ENCODE measurements at regions of chr3 and their contacts with region 1.

Region 1: DNA sequence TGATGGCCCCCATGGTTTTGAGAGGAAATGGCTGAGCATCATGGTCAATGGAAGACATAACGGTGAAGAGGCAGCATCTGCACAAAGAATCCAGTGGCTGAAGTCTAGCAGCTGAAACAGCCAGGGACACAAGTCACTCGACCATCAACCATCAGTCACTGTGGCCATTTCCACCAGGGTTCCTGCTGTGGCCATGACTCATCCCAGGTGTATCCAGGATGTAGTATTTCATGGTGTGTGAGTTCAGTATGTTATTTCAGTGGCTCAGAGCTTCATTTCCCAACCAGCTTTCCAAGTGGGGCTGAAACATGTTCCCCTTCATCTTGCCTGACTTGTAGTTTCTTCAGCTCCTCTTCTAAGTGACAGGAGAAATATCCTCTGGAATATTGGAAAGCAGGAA is 47.8 kb upstream of the WNT5A start:
- H3K4me3 ChIP-seq: no peak overlapping the region
- H3K27ac ChIP-seq: no peak overlapping the region
- H3K4me1 ChIP-seq: no peaks in the 10 kb centered on the region
- CTCF ChIP-seq: no peak

Region 2: DNA sequence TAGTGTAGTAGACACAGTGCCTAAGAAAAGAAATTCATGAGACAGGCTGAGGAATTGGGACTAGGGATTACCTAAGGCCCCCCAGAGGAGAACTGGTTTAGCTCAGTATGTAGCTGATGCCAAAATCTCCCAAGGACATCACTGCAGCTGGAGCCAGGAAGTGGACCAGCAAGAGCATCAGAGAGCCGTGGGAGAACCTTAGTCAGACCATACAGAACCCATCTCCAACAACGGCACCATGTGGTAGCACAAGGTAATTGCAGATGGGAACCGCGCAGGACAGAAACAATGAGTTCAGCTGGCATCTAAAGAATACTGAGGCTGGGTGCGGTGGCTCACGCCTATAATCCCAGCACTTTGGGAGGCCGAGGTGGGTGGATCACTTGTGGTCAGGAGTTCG is 129.4 kb before region 1 on chr3:
- CTCF ChIA-PET with region 1: no interaction called
- POLR2A ChIA-PET with region 1: no interaction called
- H3K4me3 ChIP-seq: no peak overlapping the region
- H3K27ac ChIP-seq: no peak overlapping the region
- H3K4me1 ChIP-seq: no peaks in the 10 kb centered on the region
- CTCF ChIP-seq: no peak

Region 3: GRCh38 chr3:55524565-55525244 is 10.2 kb before region 1 on chr3:
- CTCF ChIA-PET with region 1: no interaction called
- POLR2A ChIA-PET with region 1: interaction called, 12 read pairs
- H3K4me3 ChIP-seq: no peak overlapping the region
- H3K27ac ChIP-seq: no peak overlapping the region
- H3K4me1 ChIP-seq: peaks cover 7% of the 10 kb centered on the region
- CTCF ChIP-seq: no peak

Region 4: DNA sequence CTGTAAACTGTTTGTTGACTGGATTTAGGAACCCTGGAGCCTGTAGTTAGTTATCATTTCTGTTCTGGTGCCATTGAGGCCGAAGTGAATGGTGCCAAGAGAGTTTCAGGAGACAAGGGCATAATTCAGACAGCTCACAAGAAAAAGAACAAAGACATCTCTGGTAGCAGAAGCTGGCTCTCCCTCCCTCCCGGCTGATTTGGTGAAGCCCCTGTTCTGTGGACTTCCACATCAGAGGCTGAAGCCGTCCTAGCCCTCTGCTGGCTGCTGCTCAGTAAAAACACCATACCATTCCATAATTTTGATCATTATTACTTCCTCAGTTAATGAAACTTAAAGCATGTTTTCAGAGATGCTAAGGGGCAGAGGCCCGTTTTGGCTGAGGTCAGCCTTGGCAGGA is 333.5 kb after region 1 on chr3:
- CTCF ChIA-PET with region 1: no interaction called
- POLR2A ChIA-PET with region 1: no interaction called
- H3K4me3 ChIP-seq: no peak overlapping the region
- H3K27ac ChIP-seq: no peak overlapping the region
- H3K4me1 ChIP-seq: 0 out of 2 replicates have a peak, but pooled peaks cover 2% of the 10 kb centered on the region
- CTCF ChIP-seq: no peak

Region 5: GRCh38 chr3:56005196-56005805 is 470.4 kb after region 1 on chr3:
- CTCF ChIA-PET with region 1: no interaction called
- POLR2A ChIA-PET with region 1: no interaction called
- H3K4me3 ChIP-seq: no peak overlapping the region
- H3K27ac ChIP-seq: no peak overlapping the region
- H3K4me1 ChIP-seq: no peaks in the 10 kb centered on the region
- CTCF ChIP-seq: no peak